GM10248 (cell line): ENCODE measurements at regions of chr6 and their contacts with region 1.

Region 1: GRCh38 chr6:149323353-149323752 is 5.8 kb downstream of the TAB2 start:
- DNase-seq: no peak
- CTCF ChIP-seq: no peak

Region 2: GRCh38 chr6:149335924-149336608 is 12.7 kb after region 1 on chr6:
- CTCF ChIA-PET with region 1: interaction called, 10 read pairs
- POLR2A ChIA-PET with region 1: interaction called, 5 read pairs
- DNase-seq: no peak
- CTCF ChIP-seq: no peak